ENCODE measurements at regions of chr9 and their contacts with region 1.

Region 1: DNA sequence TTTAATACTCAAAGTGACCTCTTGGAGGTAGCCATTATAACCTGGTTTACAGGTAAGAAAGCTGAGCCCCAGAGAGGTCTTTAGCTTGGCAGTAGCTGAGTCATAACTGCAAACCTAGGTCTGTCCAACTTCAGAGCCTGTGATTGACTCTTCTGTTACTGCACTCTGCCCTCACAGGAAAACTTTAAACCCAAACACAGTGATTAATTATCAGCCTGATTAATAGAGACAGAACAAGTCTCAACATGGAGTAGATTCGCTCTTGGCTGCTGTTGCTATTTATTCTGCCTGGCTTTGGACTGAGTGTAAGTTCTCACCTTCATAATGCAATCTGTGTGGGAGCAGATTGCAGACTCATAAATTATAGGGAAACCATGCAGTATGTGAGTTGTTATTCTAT is 27.4 kb upstream of the TXN start:
- DNase-seq: peak in 1 of 2 experiments; percentile 54
- H3K4me3 ChIP-seq: no peak overlapping the region
- H3K4me3 Mint-ChIP-seq: no peak overlapping the region
- H3K27ac Mint-ChIP-seq: no peak overlapping the region
- H3K4me1 ChIP-seq: peaks cover 40% of the 10 kb centered on the region
- H3K4me1 Mint-ChIP-seq: peaks cover 19% of the 10 kb centered on the region
- H3K27me3 ChIP-seq: no peaks in the 10 kb centered on the region
- H3K27me3 Mint-ChIP-seq: no peaks in the 10 kb centered on the region
- CTCF ChIP-seq: no peak

Region 2: GRCh38 chr9:110058304-110058953 is 225.3 kb before region 1 on chr9:
- CTCF ChIA-PET with region 1: no interaction called
- POLR2A ChIA-PET with region 1: no interaction called
- intact Hi-C with region 1: no loop called
- DNase-seq: peak; percentile 78 to 79
- H3K4me3 ChIP-seq: no peak overlapping the region
- H3K4me3 Mint-ChIP-seq: no peak overlapping the region
- H3K27ac Mint-ChIP-seq: no peak overlapping the region
- H3K4me1 ChIP-seq: peaks cover 12% of the 10 kb centered on the region; the same call in 1 of the 2 replicates
- H3K4me1 Mint-ChIP-seq: peaks cover 18% of the 10 kb centered on the region
- H3K27me3 ChIP-seq: no peaks in the 10 kb centered on the region
- H3K27me3 Mint-ChIP-seq: no peaks in the 10 kb centered on the region
- CTCF ChIP-seq: peak; percentile 68 to 69

Region 3: DNA sequence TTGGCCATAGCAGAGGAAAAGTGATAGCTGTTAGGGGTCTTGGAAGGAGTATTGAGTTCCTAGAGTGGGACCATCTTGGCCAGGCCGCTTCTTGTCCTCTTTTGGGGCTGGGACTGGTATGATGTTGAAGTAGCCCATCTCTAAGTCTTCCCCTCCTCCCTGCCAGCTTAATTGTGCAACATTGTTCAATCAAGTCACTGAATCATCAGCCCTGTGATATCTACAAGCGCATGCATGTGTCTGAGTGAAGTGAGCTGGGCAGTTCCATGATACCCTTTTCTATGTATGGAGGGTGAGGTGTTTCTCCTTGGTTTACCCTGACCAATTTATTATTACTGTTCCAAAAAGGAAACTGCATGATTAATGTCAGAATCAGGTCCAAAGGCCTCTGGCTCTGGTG is 188.0 kb before region 1 on chr9:
- CTCF ChIA-PET with region 1: no interaction called
- POLR2A ChIA-PET with region 1: no interaction called
- intact Hi-C with region 1: no loop called
- DNase-seq: no peak
- H3K4me3 ChIP-seq: no peak overlapping the region
- H3K4me3 Mint-ChIP-seq: no peak overlapping the region
- H3K27ac Mint-ChIP-seq: no peak overlapping the region
- H3K4me1 ChIP-seq: peaks cover 12% of the 10 kb centered on the region
- H3K4me1 Mint-ChIP-seq: peaks cover 25% of the 10 kb centered on the region
- H3K27me3 ChIP-seq: no peaks in the 10 kb centered on the region
- H3K27me3 Mint-ChIP-seq: no peaks in the 10 kb centered on the region
- CTCF ChIP-seq: no peak

Region 4: DNA sequence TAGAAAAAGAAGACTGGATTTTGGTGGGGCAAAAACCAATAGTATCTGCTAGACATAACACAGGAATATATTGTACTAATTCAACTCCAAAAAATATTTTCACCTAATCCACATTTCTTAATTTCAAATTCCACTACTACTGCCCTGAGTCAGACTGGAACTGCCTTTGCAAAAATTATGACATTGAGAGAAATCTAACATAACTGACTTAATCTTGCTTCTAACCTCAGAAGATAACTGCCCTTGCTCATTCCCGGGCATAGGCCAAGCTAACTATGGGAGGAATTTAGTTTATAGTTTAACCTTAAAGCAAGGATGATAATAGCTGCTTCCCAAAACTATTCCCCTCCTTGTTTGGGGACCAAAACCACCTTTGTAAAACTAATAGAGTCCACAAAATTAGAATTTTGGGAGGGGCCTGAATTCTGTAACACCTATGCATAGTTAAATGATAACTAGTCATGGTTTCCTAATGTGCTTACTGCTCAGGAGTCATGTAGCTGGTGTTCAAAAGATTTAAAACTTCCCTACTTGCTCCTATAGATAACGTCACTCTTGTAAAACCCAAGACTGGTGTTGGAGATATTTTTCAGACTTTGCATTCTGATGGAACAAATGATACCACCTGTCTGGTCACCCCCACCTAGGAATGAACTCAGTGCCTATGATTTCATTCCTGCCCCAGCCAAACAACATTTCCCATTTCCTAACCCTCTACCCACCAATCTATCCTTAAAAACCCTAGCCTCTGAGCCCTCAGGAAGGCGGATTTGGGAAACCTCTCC is 13.3 kb before region 1 on chr9:
- CTCF ChIA-PET with region 1: no interaction called
- POLR2A ChIA-PET with region 1: no interaction called
- intact Hi-C with region 1: loop called (anchors 1 kb)
- DNase-seq: no peak
- H3K4me3 ChIP-seq: no peak overlapping the region
- H3K4me3 Mint-ChIP-seq: no peak overlapping the region
- H3K27ac Mint-ChIP-seq: no peak overlapping the region
- H3K4me1 ChIP-seq: peaks cover 21% of the 10 kb centered on the region
- H3K4me1 Mint-ChIP-seq: peaks cover 16% of the 10 kb centered on the region
- H3K27me3 ChIP-seq: no peaks in the 10 kb centered on the region
- H3K27me3 Mint-ChIP-seq: no peaks in the 10 kb centered on the region
- CTCF ChIP-seq: no peak

Region 5: DNA sequence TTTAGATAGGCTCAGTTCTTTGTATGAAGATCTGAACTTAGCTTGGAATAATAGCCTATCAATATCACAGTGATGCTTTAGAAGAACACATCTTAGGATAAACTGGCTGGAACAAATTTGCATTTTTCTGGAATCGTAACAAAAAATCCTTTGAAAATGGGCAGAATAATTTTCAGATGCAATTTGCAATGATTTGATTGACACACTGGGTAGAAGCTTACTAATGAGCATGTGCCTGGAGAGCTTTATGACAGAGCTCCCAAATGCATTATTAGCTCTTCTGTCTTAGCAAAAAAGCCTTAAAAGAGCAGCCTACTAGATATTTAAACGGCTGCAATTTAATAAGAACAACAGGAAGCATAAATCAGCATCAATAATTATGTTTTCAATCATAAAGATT is 130.7 kb after region 1 on chr9:
- CTCF ChIA-PET with region 1: no interaction called
- POLR2A ChIA-PET with region 1: no interaction called
- intact Hi-C with region 1: no loop called
- DNase-seq: no peak
- H3K4me3 ChIP-seq: no peak overlapping the region
- H3K4me3 Mint-ChIP-seq: no peak overlapping the region
- H3K27ac Mint-ChIP-seq: no peak overlapping the region
- H3K4me1 ChIP-seq: no peaks in the 10 kb centered on the region; the same call in 1 of the 2 replicates
- H3K4me1 Mint-ChIP-seq: peaks cover 15% of the 10 kb centered on the region
- H3K27me3 ChIP-seq: no peaks in the 10 kb centered on the region
- H3K27me3 Mint-ChIP-seq: no peaks in the 10 kb centered on the region
- CTCF ChIP-seq: no peak